Activated CD8-positive, alpha-beta T cell treated with anti-CD3 and anti-CD28 coated beads, Interleukin-2, amount 10 ng/mL, durations not matched to agents 7 days and 5 days (primary cell): ENCODE measurements at regions of chr2 and their contacts with region 1.

Region 1: GRCh38 chr2:217510771-217511291 is 492.0 kb downstream of the TNS1 start:
- DNase-seq: peak; percentile 73
- ATAC-seq: peak; percentile 68
- H3K4me3 Mint-ChIP-seq: no peak overlapping the region
- H3K27ac Mint-ChIP-seq: no peak overlapping the region
- H3K4me1 Mint-ChIP-seq: peaks cover 7% of the 10 kb centered on the region
- H3K27me3 Mint-ChIP-seq: no peaks in the 10 kb centered on the region

Region 2: DNA sequence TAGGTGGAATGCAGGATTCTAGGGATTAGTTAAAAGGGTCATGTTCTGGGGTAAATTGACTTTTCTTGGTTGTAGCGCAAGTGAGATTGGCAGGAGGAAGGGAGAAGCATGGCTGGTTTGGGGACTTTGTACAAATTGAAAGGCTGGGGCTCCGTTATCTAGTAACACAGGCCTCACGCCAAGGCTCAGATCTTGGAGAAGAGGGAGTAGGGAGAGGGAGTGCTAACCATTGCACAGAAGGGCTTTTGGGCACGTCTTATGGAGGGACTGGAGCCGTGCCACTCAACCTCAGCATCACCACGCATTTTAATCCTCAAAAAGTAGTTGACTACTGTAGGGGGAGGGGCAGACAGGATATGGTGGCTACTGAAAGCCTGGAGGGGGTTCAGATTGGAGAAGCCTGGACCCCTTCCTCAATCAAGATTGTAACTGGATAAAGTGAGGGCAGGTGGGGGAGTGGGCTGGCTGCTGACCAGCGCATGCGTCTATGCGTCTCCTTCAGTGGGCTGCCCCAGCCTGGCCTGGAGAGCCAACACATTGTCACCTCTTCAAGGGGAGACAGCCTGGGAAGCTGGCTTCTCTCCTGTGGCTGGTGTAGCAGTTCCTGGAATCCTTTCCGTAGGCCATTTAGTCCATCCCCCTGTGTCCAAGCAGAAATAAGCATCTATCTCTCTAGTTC is 829.7 kb before region 1 on chr2:
- CTCF ChIA-PET with region 1: interaction called, 12 read pairs
- POLR2A ChIA-PET with region 1: no interaction called
- DNase-seq: no peak
- ATAC-seq: no peak
- H3K4me3 Mint-ChIP-seq: no peak overlapping the region
- H3K27ac Mint-ChIP-seq: no peak overlapping the region
- H3K4me1 Mint-ChIP-seq: peaks cover 11% of the 10 kb centered on the region
- H3K27me3 Mint-ChIP-seq: peaks cover 16% of the 10 kb centered on the region

Region 3: DNA sequence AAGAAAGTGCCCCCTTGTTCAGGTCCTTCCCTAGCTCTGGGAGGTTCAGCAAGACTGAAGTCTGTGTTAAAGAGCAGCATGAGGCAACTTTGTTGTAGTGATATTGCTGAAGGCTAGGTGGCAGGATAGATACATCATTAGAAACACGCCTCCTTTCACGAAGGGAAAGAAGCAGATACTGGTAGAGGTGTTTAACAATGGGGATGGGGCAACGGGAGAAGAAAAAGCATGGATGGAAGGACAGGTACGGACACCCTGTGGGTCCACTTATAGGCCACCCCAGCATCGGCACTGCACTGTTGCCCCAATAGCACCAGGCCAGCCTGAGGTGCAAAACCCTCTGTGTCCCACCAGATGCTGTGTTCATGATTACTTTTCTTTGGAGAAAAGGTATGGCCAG is 811.9 kb before region 1 on chr2:
- CTCF ChIA-PET with region 1: interaction called, 16 read pairs
- POLR2A ChIA-PET with region 1: no interaction called
- DNase-seq: peak; percentile 51
- ATAC-seq: peak; percentile 57
- H3K4me3 Mint-ChIP-seq: no peak overlapping the region
- H3K27ac Mint-ChIP-seq: no peak overlapping the region
- H3K4me1 Mint-ChIP-seq: peaks cover 14% of the 10 kb centered on the region
- H3K27me3 Mint-ChIP-seq: peaks cover 39% of the 10 kb centered on the region

Region 4: DNA sequence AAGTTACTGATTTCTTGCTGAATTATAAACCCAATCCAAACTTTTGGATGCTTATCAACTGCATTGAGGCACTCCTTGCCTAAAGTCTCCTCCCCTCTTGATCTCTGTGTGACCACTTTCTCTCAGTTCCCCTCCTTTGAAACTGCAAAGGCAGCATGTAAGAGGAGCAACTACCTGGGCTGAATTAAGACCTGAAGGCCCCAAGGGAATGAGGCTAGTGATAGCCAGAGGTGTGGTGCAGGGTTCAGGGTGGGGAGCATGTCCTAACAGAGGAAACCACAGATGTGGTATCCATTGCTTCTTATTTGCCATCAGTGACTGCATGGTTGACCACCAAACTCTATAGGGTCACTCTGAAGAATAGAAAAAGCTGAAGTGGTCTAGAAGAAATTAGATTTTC is 65.9 kb before region 1 on chr2:
- CTCF ChIA-PET with region 1: no interaction called
- POLR2A ChIA-PET with region 1: no interaction called
- DNase-seq: no peak
- ATAC-seq: no peak
- H3K4me3 Mint-ChIP-seq: no peak overlapping the region
- H3K27ac Mint-ChIP-seq: no peak overlapping the region
- H3K4me1 Mint-ChIP-seq: peaks cover 8% of the 10 kb centered on the region
- H3K27me3 Mint-ChIP-seq: no peaks in the 10 kb centered on the region

Region 5: GRCh38 chr2:217713395-217714286 is 202.8 kb after region 1 on chr2:
- CTCF ChIA-PET with region 1: interaction called, 12 read pairs
- POLR2A ChIA-PET with region 1: no interaction called
- DNase-seq: peak; percentile 81
- ATAC-seq: peak; percentile 84
- H3K4me3 Mint-ChIP-seq: no peak overlapping the region
- H3K27ac Mint-ChIP-seq: no peak overlapping the region
- H3K4me1 Mint-ChIP-seq: peaks cover 5% of the 10 kb centered on the region
- H3K27me3 Mint-ChIP-seq: peaks cover 3% of the 10 kb centered on the region